IMR-90 (cell line): ENCODE measurements at regions of chr9 and their contacts with region 1.

Region 1: DNA sequence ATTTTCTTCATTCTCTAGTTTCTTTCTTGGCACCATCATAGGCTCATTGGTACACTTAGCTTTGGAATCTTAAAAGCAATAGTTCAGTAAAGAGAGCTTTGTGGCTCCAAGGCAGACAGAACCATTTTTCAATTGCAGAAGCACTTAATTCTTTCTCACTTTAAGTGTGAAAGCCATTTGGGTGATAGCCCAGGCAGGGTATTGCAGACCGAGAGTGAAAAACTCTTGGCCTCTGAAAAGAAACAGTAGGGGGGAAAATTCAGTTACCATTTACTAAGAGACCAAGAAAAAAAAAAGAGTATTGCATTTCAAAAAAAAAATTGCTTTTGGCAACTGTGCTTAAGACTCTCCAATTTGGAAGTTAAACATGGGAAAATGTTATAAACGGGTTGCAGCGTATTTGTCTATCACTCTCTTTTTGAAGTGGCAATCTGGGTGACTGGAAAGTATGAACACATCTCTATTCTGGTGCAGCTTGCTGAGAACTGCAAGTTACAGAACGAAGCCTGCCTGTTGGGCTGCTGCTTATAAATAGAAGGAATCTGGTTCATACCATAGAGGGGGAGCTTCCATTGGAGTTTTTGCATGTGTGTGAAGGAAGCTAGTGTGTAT is 170.5 kb downstream of the TLE4 start:
- DNase-seq: no peak
- ATAC-seq: no peak
- H3K4me3 ChIP-seq: no peak overlapping the region
- H3K27ac ChIP-seq: no peak overlapping the region
- H3K4me1 ChIP-seq: no peaks in the 10 kb centered on the region
- H3K27me3 ChIP-seq: no peaks in the 10 kb centered on the region
- CTCF ChIP-seq: no peak
- POLR2A ChIP-seq: no peak
- RAD21 ChIP-seq: no peak

Region 2: GRCh38 chr9:79946712-79947111 is 204.5 kb after region 1 on chr9:
- CTCF ChIA-PET with region 1: interaction called, 3 read pairs
- POLR2A ChIA-PET with region 1: no interaction called
- dilution Hi-C with region 1: no loop called
- in situ Hi-C with region 1: no loop called
- intact Hi-C with region 1: loop called (anchors 10 kb)
- DNase-seq: peak; percentile 32
- ATAC-seq: peak; percentile 68; the same call in 1 of the 2 replicates
- H3K4me3 ChIP-seq: no peak overlapping the region
- H3K27ac ChIP-seq: no peak overlapping the region; the same call in 1 of the 2 replicates
- H3K4me1 ChIP-seq: peaks cover 2% of the 10 kb centered on the region; the same call in 1 of the 2 replicates
- H3K27me3 ChIP-seq: no peaks in the 10 kb centered on the region
- CTCF ChIP-seq: no peak
- POLR2A ChIP-seq: no peak
- RAD21 ChIP-seq: no peak

Region 3: GRCh38 chr9:80191108-80191507 is 448.9 kb after region 1 on chr9:
- CTCF ChIA-PET with region 1: no interaction called
- POLR2A ChIA-PET with region 1: no interaction called
- dilution Hi-C with region 1: no loop called
- in situ Hi-C with region 1: no loop called
- intact Hi-C with region 1: no loop called
- DNase-seq: peak; percentile 57
- ATAC-seq: peak; percentile 65
- H3K4me3 ChIP-seq: no peak overlapping the region
- H3K27ac ChIP-seq: no peak overlapping the region
- H3K4me1 ChIP-seq: 0 out of 2 replicates have a peak, but pooled peaks cover 2% of the 10 kb centered on the region
- H3K27me3 ChIP-seq: no peaks in the 10 kb centered on the region
- CTCF ChIP-seq: no peak
- POLR2A ChIP-seq: no peak
- RAD21 ChIP-seq: no peak